Activated CD4-positive, alpha-beta T cell treated with anti-CD3 and anti-CD28 coated beads for 36 hours (primary cell): ENCODE measurements at regions of chr3 and their contacts with region 1.

Region 1: GRCh38 chr3:30751610-30752299 is 142.7 kb downstream of the GADL1 start:
- DNase-seq: peak; percentile 84
- ATAC-seq: peak; percentile 72
- H3K4me3 Mint-ChIP-seq: no peak overlapping the region
- H3K27ac Mint-ChIP-seq: peak overlapping the region; percentile 23
- H3K4me1 Mint-ChIP-seq: peaks cover 47% of the 10 kb centered on the region
- H3K27me3 Mint-ChIP-seq: no peaks in the 10 kb centered on the region

Region 2: DNA sequence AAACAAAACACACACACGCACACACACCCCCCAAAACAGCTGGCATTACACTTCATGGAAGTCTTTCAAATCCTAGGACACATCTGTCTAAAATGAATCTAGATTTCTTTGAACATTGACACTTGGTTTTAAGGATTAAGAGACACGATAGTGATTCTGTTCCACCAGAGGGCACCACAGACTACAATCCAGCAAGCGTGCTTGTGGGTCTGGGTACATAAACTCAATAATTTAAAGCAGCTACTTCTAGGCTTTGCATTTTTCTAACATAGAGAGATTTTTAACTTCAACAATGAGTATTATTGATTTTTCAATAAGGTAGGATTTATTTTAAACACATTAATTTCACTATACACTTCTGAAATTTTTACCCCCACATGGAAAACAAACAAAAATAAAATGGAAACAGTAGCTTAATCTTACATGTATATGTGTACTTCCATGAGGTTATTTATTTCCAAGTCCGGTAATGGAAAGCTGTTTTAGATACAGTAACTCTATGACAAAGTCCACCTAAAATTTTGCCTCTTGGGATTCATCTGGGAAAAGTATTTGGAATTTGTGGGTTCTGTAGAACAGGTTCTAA is 709.4 kb before region 1 on chr3:
- CTCF ChIA-PET with region 1: interaction called, 14 read pairs
- POLR2A ChIA-PET with region 1: no interaction called
- intact Hi-C with region 1: loop called (anchors 1 kb)
- DNase-seq: peak; percentile 75
- ATAC-seq: no peak
- H3K4me3 Mint-ChIP-seq: no peak overlapping the region
- H3K27ac Mint-ChIP-seq: no peak overlapping the region
- H3K4me1 Mint-ChIP-seq: peaks cover 3% of the 10 kb centered on the region
- H3K27me3 Mint-ChIP-seq: peaks cover 13% of the 10 kb centered on the region

Region 3: DNA sequence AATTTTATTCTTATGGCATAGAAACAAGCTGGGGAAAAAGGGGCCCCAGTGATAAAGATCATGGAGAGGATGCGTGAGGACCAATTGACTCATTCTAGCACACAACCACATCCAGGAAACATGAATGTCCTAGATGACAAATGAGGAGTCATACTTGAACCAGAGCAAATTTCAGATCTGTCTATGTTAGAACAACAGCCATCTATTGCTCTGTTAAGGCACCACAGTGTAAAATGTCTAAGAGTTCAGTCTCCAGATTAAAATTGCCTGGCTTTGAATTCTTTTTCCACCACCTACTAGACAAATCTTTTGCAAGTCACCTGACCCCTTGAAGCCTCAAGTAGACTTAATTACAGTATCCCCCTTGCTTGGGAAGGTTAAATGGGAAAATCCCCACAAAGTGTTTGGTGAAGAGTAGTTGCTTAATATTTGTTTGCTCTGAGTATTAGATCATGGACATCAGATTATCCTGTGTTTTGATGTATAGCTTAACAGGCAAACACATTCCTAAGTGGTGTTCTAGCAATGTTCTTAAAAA is 404.0 kb before region 1 on chr3:
- CTCF ChIA-PET with region 1: interaction called, 4 read pairs
- POLR2A ChIA-PET with region 1: no interaction called
- intact Hi-C with region 1: loop called (anchors 5 to 10 kb)
- DNase-seq: peak; percentile 67
- ATAC-seq: peak; percentile 97
- H3K4me3 Mint-ChIP-seq: no peak overlapping the region
- H3K27ac Mint-ChIP-seq: peak overlapping the region; percentile 82
- H3K4me1 Mint-ChIP-seq: peaks cover 85% of the 10 kb centered on the region
- H3K27me3 Mint-ChIP-seq: peaks cover 8% of the 10 kb centered on the region

Region 4: GRCh38 chr3:30623351-30623750 is 128.4 kb before region 1 on chr3:
- CTCF ChIA-PET with region 1: no interaction called
- POLR2A ChIA-PET with region 1: no interaction called
- intact Hi-C with region 1: loop called in 1 of 2 experiments (anchors 5 kb)
- DNase-seq: no peak
- ATAC-seq: peak; percentile 20
- H3K4me3 Mint-ChIP-seq: peak overlapping the region; percentile 17
- H3K27ac Mint-ChIP-seq: peak overlapping the region; percentile 83
- H3K4me1 Mint-ChIP-seq: peaks cover 96% of the 10 kb centered on the region
- H3K27me3 Mint-ChIP-seq: no peaks in the 10 kb centered on the region

Region 5: DNA sequence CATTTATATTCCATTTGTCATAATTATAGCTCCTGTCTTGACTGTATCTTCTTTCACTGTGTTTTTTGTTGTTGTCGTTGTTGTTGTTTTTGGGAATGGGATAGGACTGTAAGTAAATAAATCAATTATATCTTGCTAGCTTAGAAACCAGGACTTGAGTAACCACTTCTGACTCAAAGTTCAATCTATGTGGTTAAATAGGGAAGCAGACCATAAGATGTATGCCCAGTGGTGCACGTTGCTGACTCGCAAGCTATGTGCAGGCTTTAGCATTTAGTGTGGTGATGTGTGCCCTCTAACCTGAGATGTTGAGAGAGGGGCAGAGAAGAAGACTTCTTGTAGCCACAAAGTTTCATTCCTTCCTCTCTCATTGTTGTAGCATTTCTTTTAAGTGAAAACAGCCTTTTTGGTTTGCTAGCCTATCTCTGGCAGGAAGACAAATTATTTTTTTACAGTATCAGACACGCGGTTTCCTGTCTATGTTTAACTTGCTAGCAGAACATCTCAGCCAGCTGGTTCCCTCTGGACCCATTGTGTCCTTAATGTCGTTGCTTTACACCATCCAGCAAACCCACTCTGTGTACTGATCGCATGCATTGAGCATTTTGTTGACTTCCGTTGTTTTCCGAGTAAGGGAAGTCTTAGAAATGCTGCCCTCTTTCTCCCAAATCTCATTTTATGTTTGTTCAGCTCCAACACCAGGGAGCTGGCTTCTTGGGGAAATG is 93.3 kb before region 1 on chr3:
- CTCF ChIA-PET with region 1: no interaction called
- POLR2A ChIA-PET with region 1: no interaction called
- intact Hi-C with region 1: no loop called
- DNase-seq: peak; percentile 74
- ATAC-seq: peak; percentile 64
- H3K4me3 Mint-ChIP-seq: peak overlapping the region; percentile 60
- H3K27ac Mint-ChIP-seq: peak overlapping the region; percentile 95
- H3K4me1 Mint-ChIP-seq: peaks cover 100% of the 10 kb centered on the region
- H3K27me3 Mint-ChIP-seq: no peaks in the 10 kb centered on the region